T-cell (primary cell): ENCODE measurements at regions of chr7 and their contacts with region 1.

Region 1: GRCh38 chr7:139645572-139646523 is 122.4 kb downstream of the CLEC2L start:
- DNase-seq: peak; percentile 56 to 91 (median 77)
- ATAC-seq: peak; percentile 41 to 54 (median 50)
- H3K4me3 ChIP-seq: no peak overlapping the region
- H3K4me3 Mint-ChIP-seq: peak overlapping the region in 1 of 3 donors; percentile 33
- H3K27ac ChIP-seq: no peak overlapping the region
- H3K27ac Mint-ChIP-seq: peak overlapping the region in 1 of 2 donors; percentile 7
- H3K4me1 ChIP-seq: peaks cover 59 to 70% of the 10 kb centered on the region in 2 experiments
- H3K4me1 Mint-ChIP-seq: peaks cover 81 to 87% (median 84%) of the 10 kb centered on the region in 3 donors
- H3K27me3 ChIP-seq: no peaks in the 10 kb centered on the region
- H3K27me3 Mint-ChIP-seq: no peaks in the 10 kb centered on the region

Region 2: DNA sequence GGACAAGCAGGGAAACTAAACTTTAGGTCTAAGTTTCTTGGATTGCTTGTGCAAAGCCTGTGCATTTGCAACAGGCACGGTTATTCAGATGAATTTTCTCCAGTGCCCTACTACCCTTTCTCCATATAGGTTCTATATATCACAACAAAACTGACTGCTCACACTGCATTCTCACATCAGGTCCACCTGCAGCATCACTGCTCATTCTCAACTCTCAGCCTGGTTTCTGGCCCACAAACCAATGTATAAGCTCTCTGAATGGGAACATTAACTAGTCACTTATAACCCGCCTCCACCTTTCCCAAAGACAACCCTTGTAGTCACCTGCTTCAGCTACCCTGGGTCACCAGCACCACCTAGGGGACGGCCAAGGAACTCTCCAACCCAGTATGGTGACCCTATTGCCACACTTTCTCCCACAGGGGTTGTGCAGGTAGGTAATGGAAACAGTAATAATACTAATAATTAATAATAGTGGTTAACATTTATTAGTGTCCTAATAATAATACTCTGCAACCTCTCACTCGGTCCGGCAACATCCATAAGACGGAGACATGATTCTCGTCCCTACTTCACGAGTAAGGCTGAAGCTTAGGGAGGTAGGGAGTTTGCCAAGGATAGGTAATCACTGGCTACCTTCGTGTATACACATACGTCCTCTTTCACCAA is 25.0 kb before region 1 on chr7:
- CTCF ChIA-PET with region 1: interaction called, 9 to 22 read pairs
- POLR2A ChIA-PET with region 1: interaction called in 1 of 2 experiments, 4 read pairs
- DNase-seq: peak in 32 of 35 experiments; percentile 18 to 64 (median 45)
- ATAC-seq: peak; percentile 59 to 80 (median 65)
- H3K4me3 ChIP-seq: no peak overlapping the region
- H3K4me3 Mint-ChIP-seq: no peak overlapping the region
- H3K27ac ChIP-seq: no peak overlapping the region
- H3K27ac Mint-ChIP-seq: no peak overlapping the region
- H3K4me1 ChIP-seq: peaks cover 15 to 19% of the 10 kb centered on the region in 2 experiments
- H3K4me1 Mint-ChIP-seq: peaks cover 22 to 26% (median 23%) of the 10 kb centered on the region in 3 donors
- H3K27me3 ChIP-seq: no peaks in the 10 kb centered on the region
- H3K27me3 Mint-ChIP-seq: no peaks in the 10 kb centered on the region

Region 3: DNA sequence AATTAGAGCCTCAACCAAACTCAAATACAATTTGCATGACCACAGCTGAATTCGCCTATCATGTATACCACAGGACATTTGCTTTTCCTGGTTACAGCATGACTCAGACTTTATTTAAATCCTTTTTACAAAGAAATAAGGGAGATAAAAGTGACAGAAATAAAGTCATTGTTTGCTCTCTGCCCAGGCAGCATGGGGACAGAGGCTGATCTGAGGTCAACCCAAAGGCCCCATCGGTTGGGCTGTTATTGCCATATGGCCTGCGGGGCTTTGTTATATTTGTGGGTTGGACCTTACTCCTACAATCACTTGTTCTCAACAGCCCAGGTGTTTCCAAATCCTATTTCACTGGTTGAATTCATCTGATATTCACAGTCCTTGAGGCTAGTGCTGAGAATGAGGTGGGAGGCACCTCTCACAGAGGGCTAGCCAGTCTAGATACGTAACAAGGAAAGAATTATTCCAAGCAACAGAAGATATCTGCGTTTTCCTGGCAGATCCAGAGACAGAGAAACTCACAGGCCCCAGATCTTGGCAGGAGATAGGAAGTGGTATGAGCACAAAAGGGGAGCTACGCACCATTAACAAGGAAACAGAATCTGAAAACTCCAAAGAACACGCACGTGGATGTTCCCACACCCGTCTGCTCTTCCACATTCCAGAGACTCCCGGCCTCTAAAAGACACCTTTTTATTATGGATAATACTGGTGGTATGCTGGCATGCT is 14.6 kb after region 1 on chr7:
- CTCF ChIA-PET with region 1: interaction called, 8 to 10 read pairs
- POLR2A ChIA-PET with region 1: no interaction called
- DNase-seq: no peak
- ATAC-seq: no peak
- H3K4me3 ChIP-seq: no peak overlapping the region
- H3K4me3 Mint-ChIP-seq: no peak overlapping the region
- H3K27ac ChIP-seq: no peak overlapping the region
- H3K27ac Mint-ChIP-seq: no peak overlapping the region
- H3K4me1 ChIP-seq: peaks cover 0 to 6% of the 10 kb centered on the region in 2 experiments
- H3K4me1 Mint-ChIP-seq: peaks cover 47 to 74% (median 58%) of the 10 kb centered on the region in 3 donors
- H3K27me3 ChIP-seq: no peaks in the 10 kb centered on the region
- H3K27me3 Mint-ChIP-seq: no peaks in the 10 kb centered on the region

Region 4: DNA sequence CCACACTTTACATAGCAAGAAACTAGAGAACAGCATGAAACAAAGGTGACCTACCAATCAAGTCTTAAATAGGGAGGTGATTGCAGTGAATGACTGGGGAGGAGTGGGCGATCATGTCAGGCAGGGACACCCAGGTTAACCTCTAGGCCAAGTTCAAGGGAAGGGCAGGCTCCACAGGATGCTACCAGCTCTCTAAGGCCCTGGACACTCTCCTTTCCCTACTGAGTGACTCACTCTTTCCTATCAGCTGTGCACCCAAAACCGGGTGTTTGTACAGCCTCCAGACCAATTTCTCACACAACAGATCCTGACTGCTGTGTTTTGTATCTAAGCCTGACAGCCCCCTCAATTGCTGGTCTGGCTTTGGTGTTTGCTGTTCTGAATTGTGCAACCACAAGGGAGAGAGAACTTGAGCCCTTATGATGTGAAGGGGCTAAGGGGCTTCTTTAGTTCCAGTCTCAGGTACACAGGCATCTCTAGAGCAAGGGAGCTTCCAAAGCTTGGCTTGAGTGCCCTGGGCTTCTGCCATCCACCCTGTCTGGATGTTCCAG is 291.0 kb after region 1 on chr7:
- CTCF ChIA-PET with region 1: no interaction called
- POLR2A ChIA-PET with region 1: no interaction called
- DNase-seq: no peak
- ATAC-seq: no peak
- H3K4me3 ChIP-seq: no peak overlapping the region
- H3K4me3 Mint-ChIP-seq: no peak overlapping the region
- H3K27ac ChIP-seq: no peak overlapping the region
- H3K27ac Mint-ChIP-seq: no peak overlapping the region
- H3K4me1 ChIP-seq: no peaks in the 10 kb centered on the region
- H3K4me1 Mint-ChIP-seq: no peaks in the 10 kb centered on the region
- H3K27me3 ChIP-seq: no peaks in the 10 kb centered on the region
- H3K27me3 Mint-ChIP-seq: peaks cover 0 to 4% of the 10 kb centered on the region in 2 donors

Region 5: GRCh38 chr7:140003913-140004382 is 358.1 kb after region 1 on chr7:
- CTCF ChIA-PET with region 1: interaction called, 4 to 18 read pairs
- POLR2A ChIA-PET with region 1: no interaction called
- DNase-seq: peak in 8 of 35 experiments; percentile 4 to 51 (median 10)
- ATAC-seq: peak in 1 of 4 experiments; percentile 27
- H3K4me3 ChIP-seq: no peak overlapping the region
- H3K4me3 Mint-ChIP-seq: no peak overlapping the region
- H3K27ac ChIP-seq: no peak overlapping the region
- H3K27ac Mint-ChIP-seq: no peak overlapping the region
- H3K4me1 ChIP-seq: no peaks in the 10 kb centered on the region
- H3K4me1 Mint-ChIP-seq: no peaks in the 10 kb centered on the region
- H3K27me3 ChIP-seq: no peaks in the 10 kb centered on the region
- H3K27me3 Mint-ChIP-seq: no peaks in the 10 kb centered on the region